ENCODE measurements at regions of chr2 and their contacts with region 1.

Region 1: GRCh38 chr2:237474931-237475703 is 11.9 kb upstream of the MLPH start:
- DNase-seq: peak; percentile 99
- H3K4me3 ChIP-seq: peak overlapping the region; percentile 67 to 68
- H3K27ac ChIP-seq: peak overlapping the region; percentile 91 to 97
- H3K4me1 ChIP-seq: peaks cover 8 to 18% of the 10 kb centered on the region in 2 experiments; a peak in 3 of 4 replicates
- H3K27me3 ChIP-seq: no peaks in the 10 kb centered on the region
- CTCF ChIP-seq: peak; percentile 85
- EP300 ChIP-seq: peak in 1 of 2 experiments; percentile 41; a peak in 1 of 4 replicates
- RAD21 ChIP-seq: peak; percentile 68

Region 2: DNA sequence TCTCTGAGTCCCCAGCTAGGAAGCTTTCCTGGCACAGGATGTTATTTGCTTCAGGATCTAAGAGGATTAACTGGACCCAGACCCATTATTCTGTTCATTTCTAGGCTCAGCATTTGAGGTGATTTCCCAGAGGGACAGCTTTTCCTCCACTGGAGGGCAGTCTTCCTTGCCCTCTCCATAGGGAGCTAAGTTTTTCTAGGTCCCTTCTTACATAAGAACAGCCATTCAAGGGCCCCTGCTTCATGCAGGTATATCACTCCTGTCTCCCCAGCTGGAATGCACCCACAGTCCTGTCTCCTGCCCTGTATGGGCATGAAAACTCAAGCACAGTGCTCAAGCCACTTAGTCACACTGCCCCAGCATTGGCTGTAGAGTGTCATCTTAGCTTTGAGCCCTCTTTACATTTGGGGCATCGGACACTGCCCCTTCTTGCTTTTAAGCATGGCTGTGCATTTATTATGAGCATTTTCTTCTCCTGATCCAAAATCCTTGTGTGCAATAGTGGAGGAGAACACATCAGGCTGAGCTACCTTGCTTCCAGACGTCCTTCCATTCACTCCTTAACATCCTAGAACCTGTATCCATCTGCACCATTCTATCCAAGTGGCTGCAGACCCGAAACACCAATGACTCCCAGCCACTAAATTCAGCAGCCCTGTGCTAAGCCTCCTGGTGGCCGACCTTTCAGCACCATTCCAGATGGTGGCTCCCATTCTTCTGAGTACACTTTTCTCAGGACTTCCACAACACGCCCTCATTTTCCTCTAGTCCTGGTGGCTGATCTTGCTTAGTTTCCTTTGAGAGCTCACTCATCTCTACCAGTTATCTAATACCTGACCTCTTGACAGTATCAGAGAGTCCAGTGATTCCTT is 309.5 kb before region 1 on chr2:
- CTCF ChIA-PET with region 1: interaction called, 10 read pairs
- POLR2A ChIA-PET with region 1: no interaction called
- DNase-seq: peak; percentile 27
- H3K4me3 ChIP-seq: no peak overlapping the region
- H3K27ac ChIP-seq: no peak overlapping the region
- H3K4me1 ChIP-seq: peaks cover 0 to 3% of the 10 kb centered on the region in 2 experiments; a peak in 1 of 4 replicates
- H3K27me3 ChIP-seq: no peaks in the 10 kb centered on the region
- CTCF ChIP-seq: peak; percentile 49
- EP300 ChIP-seq: no peak
- RAD21 ChIP-seq: peak; percentile 61

Region 3: DNA sequence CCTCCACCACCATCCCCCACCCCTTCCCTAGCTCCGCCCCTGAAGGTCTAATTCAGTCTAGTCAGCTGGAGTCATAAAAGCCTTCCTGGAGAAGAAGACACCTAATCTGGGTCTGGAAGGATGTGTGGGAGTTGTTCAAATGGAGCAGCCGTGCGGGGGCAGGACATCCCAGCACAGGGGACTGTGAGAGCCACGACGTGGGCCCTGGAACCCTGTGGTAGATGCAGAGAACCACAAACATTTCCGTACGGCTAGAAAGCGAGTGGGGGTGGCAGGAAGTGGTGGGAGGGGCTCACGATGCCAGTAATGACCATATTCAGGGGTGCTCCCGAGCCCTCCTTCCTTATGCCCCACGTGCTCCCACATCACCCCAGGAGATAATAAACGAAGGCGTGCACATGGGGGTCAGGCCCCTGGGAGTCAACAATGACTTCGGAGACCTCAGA is 40.2 kb before region 1 on chr2:
- CTCF ChIA-PET with region 1: interaction called, 13 read pairs
- POLR2A ChIA-PET with region 1: interaction called, 4 read pairs
- DNase-seq: no peak
- H3K4me3 ChIP-seq: no peak overlapping the region
- H3K27ac ChIP-seq: peak overlapping the region; percentile 12 to 99; a peak in 3 of 4 replicates
- H3K4me1 ChIP-seq: peaks cover 34 to 45% of the 10 kb centered on the region in 2 experiments
- H3K27me3 ChIP-seq: no peaks in the 10 kb centered on the region
- CTCF ChIP-seq: no peak
- EP300 ChIP-seq: no peak
- RAD21 ChIP-seq: no peak

Region 4: DNA sequence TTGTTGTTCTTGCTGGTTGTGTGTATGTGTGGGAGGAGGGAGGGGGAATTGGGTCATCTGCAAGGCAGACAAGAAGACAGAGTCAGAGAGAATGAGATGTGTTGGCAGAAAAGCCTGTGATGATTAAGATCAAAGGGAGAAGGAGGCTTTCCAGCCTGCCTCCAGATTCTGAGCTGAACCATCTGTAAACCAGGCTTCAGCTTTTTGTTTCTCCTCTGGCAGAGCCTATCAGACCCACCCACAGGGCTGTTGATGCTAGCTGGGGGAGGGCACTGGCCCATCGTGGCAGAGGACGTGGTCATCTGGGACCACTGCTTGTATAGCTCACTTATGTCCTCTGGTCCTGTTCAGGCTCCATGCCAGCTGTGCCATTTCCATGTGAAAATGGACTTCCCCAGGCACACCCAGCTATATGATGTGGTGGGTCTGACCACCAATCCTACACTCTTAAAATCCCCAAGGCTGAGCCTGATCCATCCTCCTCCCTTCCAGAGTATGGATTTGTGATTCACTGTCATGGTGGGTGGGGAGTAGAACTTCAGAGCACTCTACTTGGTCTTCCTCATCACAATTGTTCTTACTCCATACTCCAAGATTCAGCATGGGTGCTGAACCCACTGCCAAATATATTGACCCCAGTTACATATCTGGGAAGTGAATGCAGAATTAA is 33.4 kb before region 1 on chr2:
- CTCF ChIA-PET with region 1: interaction called, 10 read pairs
- POLR2A ChIA-PET with region 1: no interaction called
- DNase-seq: peak; percentile 80
- H3K4me3 ChIP-seq: no peak overlapping the region
- H3K27ac ChIP-seq: peak overlapping the region; percentile 85 to 93
- H3K4me1 ChIP-seq: peaks cover 17 to 34% of the 10 kb centered on the region in 2 experiments
- H3K27me3 ChIP-seq: no peaks in the 10 kb centered on the region
- CTCF ChIP-seq: no peak
- EP300 ChIP-seq: peak; percentile 32 to 63; a peak in 3 of 4 replicates
- RAD21 ChIP-seq: peak; percentile 1; the same call in 1 of the 2 replicates

Region 5: DNA sequence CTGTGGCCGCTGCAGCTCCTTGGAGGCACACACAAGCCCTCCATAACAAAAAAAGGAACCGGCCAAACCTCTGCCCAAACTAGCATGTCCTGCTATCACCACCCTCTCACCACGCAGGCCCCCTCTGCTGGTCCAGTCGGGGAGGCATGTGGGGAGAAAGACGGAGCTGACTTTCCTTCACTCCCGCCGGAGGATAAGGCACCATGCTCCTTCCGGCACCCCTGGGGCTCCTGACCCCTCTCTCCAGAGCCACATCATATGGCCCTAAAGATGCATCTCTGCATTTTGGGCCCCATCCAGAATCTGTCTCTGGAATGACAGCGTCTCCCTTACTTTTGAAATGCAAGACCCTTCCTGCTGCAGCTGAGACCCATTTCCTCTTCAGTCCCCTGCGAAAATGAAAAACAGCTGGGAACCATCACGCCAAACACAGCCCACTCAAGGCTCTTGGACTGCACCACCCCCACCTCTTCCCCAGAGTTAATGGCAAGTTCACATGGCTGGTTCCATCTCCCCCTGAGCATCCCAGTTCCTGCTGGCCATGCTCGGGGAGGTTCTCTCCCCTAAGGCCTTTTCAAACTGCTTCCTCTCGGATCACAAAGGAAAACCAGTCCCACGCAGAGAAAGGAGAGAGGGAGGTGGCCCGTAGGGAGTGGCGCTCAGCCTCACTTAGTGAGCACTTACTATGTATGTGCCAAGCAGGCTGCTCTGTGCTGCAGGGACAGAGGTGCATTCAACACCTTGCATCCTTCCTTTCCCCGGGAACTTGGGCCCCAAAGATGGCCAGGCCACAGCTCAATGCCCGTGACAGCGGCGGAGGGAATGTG is 23.3 kb before region 1 on chr2:
- CTCF ChIA-PET with region 1: interaction called, 14 read pairs
- POLR2A ChIA-PET with region 1: interaction called, 4 read pairs
- DNase-seq: peak; percentile 87
- H3K4me3 ChIP-seq: no peak overlapping the region
- H3K27ac ChIP-seq: peak overlapping the region in 1 of 2 experiments; percentile 83; a peak in 2 of 4 replicates
- H3K4me1 ChIP-seq: peaks cover 0 to 24% of the 10 kb centered on the region in 2 experiments; a peak in 1 of 4 replicates
- H3K27me3 ChIP-seq: no peaks in the 10 kb centered on the region
- CTCF ChIP-seq: peak; percentile 28
- EP300 ChIP-seq: peak in 1 of 2 experiments; percentile 68; a peak in 2 of 4 replicates
- RAD21 ChIP-seq: peak; percentile 47